ENCODE measurements at regions of chr10 and their contacts with region 1.

Region 1: GRCh38 chr10:5583525-5584175 is 58.9 kb downstream of the CALML3 start:
- DNase-seq: peak; percentile 84
- ATAC-seq: peak; percentile 50
- H3K4me3 ChIP-seq: no peak overlapping the region
- H3K27ac ChIP-seq: peak overlapping the region; percentile 100
- H3K4me1 ChIP-seq: peaks cover 36% of the 10 kb centered on the region
- H3K27me3 ChIP-seq: no peaks in the 10 kb centered on the region
- CTCF ChIP-seq: no peak

Region 2: DNA sequence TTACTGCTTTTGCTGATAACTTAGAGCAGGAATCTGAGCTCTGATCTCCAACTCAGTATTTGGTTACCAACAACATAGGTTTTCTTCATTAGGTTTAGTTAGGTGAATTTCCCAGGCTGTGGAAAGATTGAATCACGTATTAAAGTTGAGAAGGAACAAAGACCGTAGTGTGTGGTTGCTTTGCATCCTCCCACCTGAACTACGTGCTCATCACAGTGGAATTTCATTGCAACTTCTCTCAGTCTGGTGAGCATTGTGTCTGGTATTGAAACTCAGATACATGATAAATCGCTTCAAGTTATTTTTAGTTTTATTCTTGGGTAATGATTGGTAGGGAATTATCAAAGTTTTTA is 897.0 kb before region 1 on chr10:
- CTCF ChIA-PET with region 1: no interaction called
- POLR2A ChIA-PET with region 1: no interaction called
- intact Hi-C with region 1: no loop called
- DNase-seq: peak; percentile 93
- ATAC-seq: peak; percentile 83
- H3K4me3 ChIP-seq: no peak overlapping the region
- H3K27ac ChIP-seq: peak overlapping the region; percentile 100
- H3K4me1 ChIP-seq: peaks cover 63% of the 10 kb centered on the region
- H3K27me3 ChIP-seq: no peaks in the 10 kb centered on the region
- CTCF ChIP-seq: no peak

Region 3: GRCh38 chr10:5559642-5560141 is 24.0 kb before region 1 on chr10:
- CTCF ChIA-PET with region 1: no interaction called
- POLR2A ChIA-PET with region 1: no interaction called
- intact Hi-C with region 1: loop called (anchors 2 kb)
- DNase-seq: peak; percentile 68
- ATAC-seq: peak; percentile 68
- H3K4me3 ChIP-seq: peak overlapping the region; percentile 46; the same call in 1 of the 2 replicates
- H3K27ac ChIP-seq: peak overlapping the region; percentile 99
- H3K4me1 ChIP-seq: peaks cover 41% of the 10 kb centered on the region
- H3K27me3 ChIP-seq: no peaks in the 10 kb centered on the region
- CTCF ChIP-seq: no peak

Region 4: DNA sequence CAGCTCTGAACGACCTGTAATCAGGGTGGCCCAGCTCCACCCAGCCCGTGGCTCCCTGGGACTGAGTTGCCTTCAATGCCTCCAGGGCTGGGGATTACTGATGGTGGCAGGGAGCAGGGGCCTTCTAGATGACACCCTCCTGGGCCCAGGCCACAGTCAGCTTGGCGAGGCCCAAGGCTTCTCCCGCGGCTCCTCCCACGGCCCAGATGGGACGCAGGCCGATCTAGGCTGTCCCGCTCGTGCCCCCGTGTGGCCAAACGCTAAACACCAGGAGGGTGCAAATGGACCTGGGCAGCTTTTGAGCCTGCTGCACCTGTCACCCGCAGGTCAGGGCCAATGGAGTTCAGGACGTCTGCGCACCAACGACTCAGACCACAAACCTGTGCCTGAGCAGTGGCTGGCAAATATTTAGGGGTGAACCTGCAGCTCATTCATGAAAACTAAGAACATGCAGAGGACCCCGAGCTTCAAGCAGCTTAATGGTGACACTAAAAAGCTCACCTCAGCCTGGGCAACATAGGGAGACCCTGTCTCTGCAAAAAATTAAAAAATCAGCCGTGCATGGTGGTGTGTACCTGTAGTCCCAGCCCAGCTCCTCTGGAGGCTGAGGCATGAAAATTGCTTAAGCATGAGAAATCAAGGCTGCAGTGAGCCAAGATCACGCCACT is 39.6 kb after region 1 on chr10:
- CTCF ChIA-PET with region 1: interaction called, 6 read pairs
- POLR2A ChIA-PET with region 1: no interaction called
- intact Hi-C with region 1: loop called (anchors 5 kb)
- DNase-seq: peak; percentile 81
- ATAC-seq: peak; percentile 90
- H3K4me3 ChIP-seq: no peak overlapping the region
- H3K27ac ChIP-seq: peak overlapping the region; percentile 76
- H3K4me1 ChIP-seq: peaks cover 11% of the 10 kb centered on the region; the same call in 1 of the 2 replicates
- H3K27me3 ChIP-seq: no peaks in the 10 kb centered on the region
- CTCF ChIP-seq: peak; percentile 74

Region 5: GRCh38 chr10:5746197-5746596 is 162.5 kb after region 1 on chr10:
- CTCF ChIA-PET with region 1: no interaction called
- POLR2A ChIA-PET with region 1: no interaction called
- intact Hi-C with region 1: no loop called
- DNase-seq: no peak
- ATAC-seq: no peak
- H3K4me3 ChIP-seq: no peak overlapping the region
- H3K27ac ChIP-seq: no peak overlapping the region
- H3K4me1 ChIP-seq: no peaks in the 10 kb centered on the region
- H3K27me3 ChIP-seq: no peaks in the 10 kb centered on the region
- CTCF ChIP-seq: no peak

Region 6: DNA sequence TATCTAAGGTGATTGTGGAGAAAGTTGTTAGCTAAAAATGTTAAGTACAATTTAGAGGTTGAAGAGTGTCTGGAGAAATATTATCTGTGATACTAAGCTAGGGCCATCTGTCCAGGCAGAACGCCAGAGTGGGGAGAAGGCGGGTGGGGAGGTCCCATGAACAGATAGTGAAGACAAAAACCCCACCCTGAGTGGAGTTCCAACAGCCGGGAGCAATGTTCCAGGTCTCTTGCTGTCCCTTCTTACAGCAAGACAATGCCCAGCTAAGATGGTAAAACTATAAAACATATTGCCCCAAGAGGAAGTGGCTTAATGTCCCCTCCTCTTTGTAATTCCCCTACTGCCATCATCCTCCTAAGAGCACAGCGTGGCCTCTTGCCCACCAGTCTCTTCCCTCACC is 404.1 kb after region 1 on chr10:
- CTCF ChIA-PET with region 1: no interaction called
- POLR2A ChIA-PET with region 1: no interaction called
- intact Hi-C with region 1: no loop called
- DNase-seq: no peak
- ATAC-seq: no peak
- H3K4me3 ChIP-seq: no peak overlapping the region
- H3K27ac ChIP-seq: no peak overlapping the region
- H3K4me1 ChIP-seq: no peaks in the 10 kb centered on the region
- H3K27me3 ChIP-seq: no peaks in the 10 kb centered on the region
- CTCF ChIP-seq: no peak